Natural killer cell (primary cell): ENCODE measurements at regions of chr3 and their contacts with region 1.

Region 1: GRCh38 chr3:17151598-17152373 is 267.0 kb downstream of the PLCL2 start:
- DNase-seq: peak; percentile 80 to 87
- ATAC-seq: peak; percentile 82 to 90 (median 87)
- H3K4me3 ChIP-seq: peak overlapping the region; percentile 2
- H3K4me3 Mint-ChIP-seq: peak overlapping the region; percentile 75
- H3K27ac ChIP-seq: peak overlapping the region; percentile 81
- H3K27ac Mint-ChIP-seq: peak overlapping the region; percentile 85 to 86
- H3K4me1 ChIP-seq: peaks cover 68% of the 10 kb centered on the region
- H3K4me1 Mint-ChIP-seq: peaks cover 74 to 80% of the 10 kb centered on the region in 2 donors
- H3K27me3 ChIP-seq: no peaks in the 10 kb centered on the region
- H3K27me3 Mint-ChIP-seq: no peaks in the 10 kb centered on the region
- CTCF ChIP-seq: no peak

Region 2: DNA sequence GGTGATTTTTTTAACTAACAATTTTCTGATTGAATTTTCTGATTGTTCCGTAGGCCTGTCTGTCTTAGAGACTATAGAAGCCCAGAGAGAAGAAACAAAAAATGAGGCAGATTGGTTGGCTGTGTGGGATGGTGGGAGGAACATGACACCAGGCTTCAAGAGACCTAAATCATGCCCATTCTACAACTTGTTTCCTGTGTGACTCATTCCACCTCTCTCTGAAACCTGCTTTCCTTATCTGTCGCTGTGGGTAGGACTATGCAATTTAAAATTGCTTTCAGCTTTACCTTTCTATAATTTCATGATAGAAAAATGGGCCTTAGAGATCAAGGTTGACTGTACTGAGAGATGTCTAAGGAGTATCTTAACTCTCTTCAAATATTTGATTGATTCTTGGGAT is 842.2 kb before region 1 on chr3:
- intact Hi-C with region 1: loop called (anchors 10 kb)
- DNase-seq: peak in 1 of 2 donors; percentile 84
- ATAC-seq: peak; percentile 74 to 82 (median 76)
- H3K4me3 ChIP-seq: no peak overlapping the region
- H3K4me3 Mint-ChIP-seq: peak overlapping the region; percentile 62
- H3K27ac ChIP-seq: peak overlapping the region; percentile 55
- H3K27ac Mint-ChIP-seq: peak overlapping the region; percentile 82 to 86
- H3K4me1 ChIP-seq: peaks cover 57% of the 10 kb centered on the region
- H3K4me1 Mint-ChIP-seq: peaks cover 70 to 82% of the 10 kb centered on the region in 2 donors
- H3K27me3 ChIP-seq: no peaks in the 10 kb centered on the region
- H3K27me3 Mint-ChIP-seq: no peaks in the 10 kb centered on the region
- CTCF ChIP-seq: no peak

Region 3: GRCh38 chr3:16600780-16601539 is 550.8 kb before region 1 on chr3:
- intact Hi-C with region 1: loop called (anchors 5 kb)
- DNase-seq: peak; percentile 75 to 93
- ATAC-seq: peak; percentile 63 to 75 (median 74)
- H3K4me3 ChIP-seq: no peak overlapping the region
- H3K4me3 Mint-ChIP-seq: no peak overlapping the region
- H3K27ac ChIP-seq: no peak overlapping the region
- H3K27ac Mint-ChIP-seq: no peak overlapping the region
- H3K4me1 ChIP-seq: no peaks in the 10 kb centered on the region
- H3K4me1 Mint-ChIP-seq: peaks cover 0 to 7% of the 10 kb centered on the region in 2 donors
- H3K27me3 ChIP-seq: no peaks in the 10 kb centered on the region
- H3K27me3 Mint-ChIP-seq: peaks cover 5 to 21% of the 10 kb centered on the region in 2 donors
- CTCF ChIP-seq: peak; percentile 92

Region 4: GRCh38 chr3:16884084-16884747 is 267.6 kb before region 1 on chr3:
- intact Hi-C with region 1: loop called (anchors 1 kb)
- DNase-seq: peak; percentile 70 to 82
- ATAC-seq: peak; percentile 53 to 67 (median 55)
- H3K4me3 ChIP-seq: peak overlapping the region; percentile 99
- H3K4me3 Mint-ChIP-seq: peak overlapping the region; percentile 99
- H3K27ac ChIP-seq: peak overlapping the region; percentile 83
- H3K27ac Mint-ChIP-seq: peak overlapping the region; percentile 96
- H3K4me1 ChIP-seq: peaks cover 19% of the 10 kb centered on the region
- H3K4me1 Mint-ChIP-seq: peaks cover 38 to 49% of the 10 kb centered on the region in 2 donors
- H3K27me3 ChIP-seq: no peaks in the 10 kb centered on the region
- H3K27me3 Mint-ChIP-seq: peaks cover 4 to 7% of the 10 kb centered on the region in 2 donors
- CTCF ChIP-seq: peak; percentile 61

Region 5: GRCh38 chr3:16993227-16993626 is 158.6 kb before region 1 on chr3:
- intact Hi-C with region 1: loop called (anchors 10 kb)
- DNase-seq: no peak
- ATAC-seq: no peak
- H3K4me3 ChIP-seq: no peak overlapping the region
- H3K4me3 Mint-ChIP-seq: no peak overlapping the region
- H3K27ac ChIP-seq: no peak overlapping the region
- H3K27ac Mint-ChIP-seq: peak overlapping the region; percentile 73 to 77
- H3K4me1 ChIP-seq: peaks cover 48% of the 10 kb centered on the region
- H3K4me1 Mint-ChIP-seq: peaks cover 88 to 95% of the 10 kb centered on the region in 2 donors
- H3K27me3 ChIP-seq: no peaks in the 10 kb centered on the region
- H3K27me3 Mint-ChIP-seq: no peaks in the 10 kb centered on the region
- CTCF ChIP-seq: no peak

Region 6: GRCh38 chr3:17032407-17033034 is 119.3 kb before region 1 on chr3:
- intact Hi-C with region 1: loop called (anchors 2 kb)
- DNase-seq: peak in 1 of 2 donors; percentile 25
- ATAC-seq: no peak
- H3K4me3 ChIP-seq: no peak overlapping the region
- H3K4me3 Mint-ChIP-seq: peak overlapping the region; percentile 47
- H3K27ac ChIP-seq: no peak overlapping the region
- H3K27ac Mint-ChIP-seq: peak overlapping the region; percentile 67 to 76
- H3K4me1 ChIP-seq: peaks cover 23% of the 10 kb centered on the region
- H3K4me1 Mint-ChIP-seq: peaks cover 68 to 76% of the 10 kb centered on the region in 2 donors
- H3K27me3 ChIP-seq: no peaks in the 10 kb centered on the region
- H3K27me3 Mint-ChIP-seq: no peaks in the 10 kb centered on the region
- CTCF ChIP-seq: peak; percentile 23

Region 7: GRCh38 chr3:17182166-17182565 is 30.4 kb after region 1 on chr3:
- intact Hi-C with region 1: loop called (anchors 2 kb)
- DNase-seq: peak in 1 of 2 donors; percentile 14
- ATAC-seq: peak in 2 of 3 donors; percentile 41 to 62
- H3K4me3 ChIP-seq: no peak overlapping the region
- H3K4me3 Mint-ChIP-seq: peak overlapping the region; percentile 45
- H3K27ac ChIP-seq: no peak overlapping the region
- H3K27ac Mint-ChIP-seq: peak overlapping the region in 1 of 2 donors; percentile 83
- H3K4me1 ChIP-seq: peaks cover 15% of the 10 kb centered on the region
- H3K4me1 Mint-ChIP-seq: peaks cover 30 to 38% of the 10 kb centered on the region in 2 donors
- H3K27me3 ChIP-seq: no peaks in the 10 kb centered on the region
- H3K27me3 Mint-ChIP-seq: no peaks in the 10 kb centered on the region
- CTCF ChIP-seq: no peak